OCI-LY7 (cell line): ENCODE measurements at regions of chr5 and their contacts with region 1.

Region 1: DNA sequence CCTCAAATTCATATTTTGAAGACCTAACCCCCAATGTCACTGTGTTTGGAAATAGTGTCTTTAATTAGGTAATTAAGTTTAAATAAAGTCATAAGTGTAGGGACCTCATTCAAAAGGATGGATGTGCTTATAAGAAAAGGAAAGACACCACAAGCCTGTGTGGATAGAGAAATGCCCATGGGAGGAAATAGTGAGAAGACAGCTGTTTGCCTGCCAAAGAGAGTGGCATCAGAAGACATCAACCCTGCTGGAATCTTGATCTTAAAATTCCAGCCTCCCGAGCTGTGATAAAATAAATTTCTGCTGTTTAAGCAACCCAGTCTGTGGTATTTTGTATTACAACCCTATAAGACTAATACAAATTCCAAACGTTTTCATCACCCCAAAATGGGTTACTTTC is 1867.9 kb upstream of the NUDT12 start:
- DNase-seq: no peak
- H3K4me3 ChIP-seq: no peak overlapping the region
- H3K27ac ChIP-seq: no peak overlapping the region
- H3K4me1 ChIP-seq: no peaks in the 10 kb centered on the region
- CTCF ChIP-seq: no peak

Region 2: DNA sequence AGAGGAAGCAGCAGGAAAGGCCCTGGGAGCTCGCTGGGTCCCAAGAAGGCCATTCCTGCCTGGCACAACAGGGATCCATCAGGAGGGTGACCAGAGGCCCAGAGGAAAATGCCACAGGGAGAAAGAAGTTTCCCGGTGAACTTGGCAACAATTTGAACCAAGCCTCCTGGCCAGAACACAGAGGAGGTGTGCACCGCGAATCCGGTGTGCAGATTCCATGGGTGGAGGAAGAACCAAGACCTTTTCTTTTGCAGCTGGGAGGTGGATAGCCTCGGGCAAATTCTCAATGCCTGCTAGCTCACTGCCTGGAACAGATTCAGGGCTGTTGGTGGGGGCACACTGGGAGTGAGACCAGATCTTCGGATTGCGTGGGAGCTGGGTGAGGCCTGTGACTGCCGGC is 17.0 kb before region 1 on chr5:
- CTCF ChIA-PET with region 1: no interaction called
- POLR2A ChIA-PET with region 1: interaction called, 3 read pairs
- intact Hi-C with region 1: loop called (anchors 2 kb)
- DNase-seq: no peak
- H3K4me3 ChIP-seq: no peak overlapping the region
- H3K27ac ChIP-seq: no peak overlapping the region
- H3K4me1 ChIP-seq: no peaks in the 10 kb centered on the region
- CTCF ChIP-seq: no peak